Body of pancreas (tissue), 4 donors: ENCODE measurements at regions of chr11 and their contacts with region 1.

Region 1: DNA sequence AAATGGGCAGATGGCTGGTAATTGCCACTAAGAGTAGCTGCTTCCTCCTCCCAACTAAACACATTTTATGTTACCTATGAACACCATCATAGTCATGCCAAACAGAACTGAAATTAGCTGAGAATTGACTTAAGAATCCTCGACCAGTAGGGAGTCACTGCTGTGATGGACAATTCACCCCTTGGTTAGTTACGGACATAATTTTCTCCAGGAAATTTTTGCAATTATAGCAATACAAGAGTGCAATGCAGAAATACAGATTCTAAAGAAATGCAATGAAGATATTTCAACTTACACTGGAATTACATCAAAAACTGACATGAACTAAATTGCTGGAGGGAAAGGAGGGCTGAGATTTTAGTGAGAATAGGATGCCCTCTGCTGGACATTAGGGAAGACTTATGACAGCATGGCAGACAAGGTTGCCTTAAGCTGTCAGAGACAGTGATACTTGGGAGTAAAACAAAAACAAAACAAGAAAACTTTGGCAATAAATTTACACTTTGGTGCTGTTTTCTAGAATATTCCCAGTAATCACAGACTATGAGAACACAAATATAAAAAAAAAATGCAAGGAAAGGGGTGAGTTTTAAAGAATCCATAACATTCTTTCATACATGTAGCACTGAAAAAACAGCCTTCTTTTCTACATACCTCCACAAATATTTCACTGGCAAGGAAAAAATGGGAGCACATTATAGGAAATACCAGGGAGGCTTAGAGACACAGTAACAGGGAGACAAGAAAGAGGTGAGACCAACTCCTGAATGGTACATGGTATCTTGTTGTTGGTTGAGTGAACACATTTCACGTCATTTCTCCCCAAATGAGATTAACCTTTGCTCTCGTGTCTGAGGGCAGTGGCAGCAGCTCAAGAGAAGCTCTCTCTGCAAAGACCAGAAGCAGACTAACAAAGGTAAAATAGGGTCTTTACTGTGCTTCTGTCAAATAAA is 11.2 kb upstream of the PPP2R1B start:
- DNase-seq: peak in 3 of 4 donors; percentile 33 to 65 (median 38)
- ATAC-seq: peak; percentile 69
- H3K4me3 ChIP-seq: no peak overlapping the region
- H3K27ac ChIP-seq: peak overlapping the region in 2 of 4 donors; percentile 17 to 83
- H3K4me1 ChIP-seq: peaks cover 41% of the 10 kb centered on the region
- H3K27me3 ChIP-seq: no peaks in the 10 kb centered on the region
- CTCF ChIP-seq: peak; percentile 24 to 91 (median 85)
- POLR2A ChIP-seq: no peak

Region 2: GRCh38 chr11:111589886-111590499 is 187.4 kb before region 1 on chr11:
- intact Hi-C with region 1: loop called (anchors 5 kb)
- DNase-seq: no peak
- ATAC-seq: no peak
- H3K4me3 ChIP-seq: no peak overlapping the region
- H3K27ac ChIP-seq: no peak overlapping the region
- H3K4me1 ChIP-seq: no peaks in the 10 kb centered on the region
- H3K27me3 ChIP-seq: no peaks in the 10 kb centered on the region
- CTCF ChIP-seq: no peak
- POLR2A ChIP-seq: no peak

Region 3: DNA sequence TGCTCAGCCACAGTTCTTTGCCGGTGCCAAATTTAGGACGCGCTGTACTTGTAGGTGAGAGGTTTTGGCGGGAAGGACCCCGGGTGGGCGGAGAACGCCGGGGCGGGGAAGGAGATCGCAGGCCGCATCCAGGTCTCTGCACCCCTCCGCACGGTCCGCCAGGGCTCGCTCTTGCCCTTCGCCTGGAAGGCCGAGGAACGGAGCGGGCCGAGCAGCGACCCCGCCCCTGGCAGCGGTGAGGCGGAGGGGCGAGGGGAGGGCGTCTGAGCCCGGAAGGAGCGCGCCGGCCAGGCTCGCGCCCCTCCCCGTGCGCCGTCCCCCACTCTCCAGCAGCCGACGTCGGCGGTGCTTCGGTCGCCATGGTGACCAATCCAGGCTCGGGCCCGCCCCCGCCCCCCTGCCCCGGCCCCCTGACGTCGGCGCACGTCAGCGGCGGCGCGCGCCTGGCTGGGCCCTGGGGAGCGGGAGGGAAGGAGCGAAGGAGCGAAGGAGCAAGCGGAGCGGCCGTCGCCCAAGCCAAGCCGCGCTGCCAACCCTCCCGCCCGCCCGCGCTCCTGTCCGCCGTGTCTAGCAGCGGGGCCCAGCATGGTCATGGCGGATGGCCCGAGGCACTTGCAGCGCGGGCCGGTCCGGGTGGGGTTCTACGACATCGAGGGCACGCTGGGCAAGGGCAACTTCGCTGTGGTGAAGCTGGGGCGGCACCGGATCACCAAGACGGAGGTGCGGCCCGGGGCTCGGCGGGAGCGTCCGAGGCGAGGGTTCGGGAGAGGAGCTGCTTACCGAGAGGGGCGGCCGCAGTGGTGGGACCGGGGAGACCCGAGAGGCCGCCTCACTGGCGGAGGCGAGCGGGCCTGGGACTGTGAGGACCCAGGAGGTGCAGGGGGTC is 175.1 kb before region 1 on chr11 and contains the start of gene SIK2:
- intact Hi-C with region 1: loop called (anchors 5 kb)
- DNase-seq: peak; percentile 96 to 97 (median 97)
- ATAC-seq: peak; percentile 94
- H3K4me3 ChIP-seq: peak within 1 kb of the TSS; percentile 51 to 91
- H3K27ac ChIP-seq: peak within 1 kb of the TSS; percentile 96 to 98 (median 98)
- H3K4me1 ChIP-seq: peaks cover 40% of the 10 kb centered on the region
- H3K27me3 ChIP-seq: no peaks in the 10 kb centered on the region
- CTCF ChIP-seq: peak; percentile 77 to 99 (median 98)
- POLR2A ChIP-seq: peak; percentile 42 to 63 (median 59)
- total RNA-seq, gene SIK2: 15.3 to 16.5 TPM

Region 4: DNA sequence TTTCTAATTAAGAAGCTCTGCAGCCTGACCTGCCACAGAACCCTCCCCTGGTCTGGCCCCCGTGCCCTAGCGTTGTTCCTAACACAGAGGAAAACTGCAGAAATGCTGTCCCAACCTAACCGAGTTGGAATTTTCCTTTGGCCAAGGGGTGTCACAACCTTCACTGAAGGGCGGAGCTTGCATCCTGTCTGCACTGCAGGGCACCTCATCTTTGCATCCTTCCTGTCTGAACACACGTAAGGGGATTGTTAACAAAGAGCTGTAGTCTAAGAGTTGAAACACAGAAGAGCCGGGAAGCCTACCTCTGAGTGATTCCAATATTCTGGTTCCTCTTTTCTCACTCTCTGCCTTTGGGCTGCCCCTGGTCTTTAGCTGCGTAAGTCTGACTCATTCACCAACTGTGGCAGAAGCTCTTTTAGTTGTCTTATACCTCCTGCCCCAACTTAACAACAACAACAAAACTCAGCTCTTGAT is 161.4 kb after region 1 on chr11:
- intact Hi-C with region 1: no loop called
- DNase-seq: no peak
- ATAC-seq: no peak
- H3K4me3 ChIP-seq: no peak overlapping the region
- H3K27ac ChIP-seq: no peak overlapping the region
- H3K4me1 ChIP-seq: peaks cover 14% of the 10 kb centered on the region
- H3K27me3 ChIP-seq: no peaks in the 10 kb centered on the region
- CTCF ChIP-seq: no peak
- POLR2A ChIP-seq: no peak